ENCODE measurements at regions of chr12 and their contacts with region 1.

Region 1: DNA sequence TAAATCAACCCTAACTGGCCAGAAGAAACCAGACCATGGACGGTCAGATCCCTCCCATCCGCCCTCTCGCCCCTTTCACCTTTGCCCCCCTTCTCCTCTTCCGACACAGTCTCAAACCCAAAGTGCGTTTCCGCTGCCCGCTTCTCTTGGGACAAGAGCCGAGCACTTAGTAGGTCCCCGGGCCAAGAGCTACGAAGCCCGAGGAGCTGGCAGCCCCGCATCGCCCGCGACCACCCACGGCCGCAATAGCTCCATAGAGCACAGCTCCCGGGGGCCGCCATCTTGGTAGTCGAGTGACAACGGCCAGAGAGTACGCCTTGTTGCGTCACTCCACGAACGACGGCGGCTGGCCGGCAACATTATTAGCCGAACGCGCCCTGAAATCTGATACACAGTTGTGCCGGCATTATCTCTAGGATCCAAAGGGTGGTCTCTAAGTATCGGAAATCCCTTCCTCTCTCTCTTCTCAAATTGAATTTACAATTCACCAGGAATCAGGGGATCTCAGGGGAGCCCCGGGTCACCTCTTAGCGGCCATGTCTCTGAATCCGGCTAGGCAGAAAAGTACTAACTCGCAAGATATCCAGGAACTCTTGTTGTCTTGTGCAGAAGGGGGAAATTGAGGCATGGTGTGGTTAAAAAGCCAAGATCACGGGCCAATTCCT is at the start of gene COQ5:
- DNase-seq: peak; percentile 84 to 87
- H3K4me3 ChIP-seq: peak within 1 kb of the TSS; percentile 89
- H3K4me3 Mint-ChIP-seq: peak within 1 kb of the TSS; percentile 81
- H3K27ac Mint-ChIP-seq: peak within 1 kb of the TSS; percentile 93
- H3K4me1 ChIP-seq: peaks cover 5% of the 10 kb centered on the region; the same call in 1 of the 2 replicates
- H3K4me1 Mint-ChIP-seq: peaks cover 6% of the 10 kb centered on the region
- H3K27me3 ChIP-seq: no peaks in the 10 kb centered on the region
- H3K27me3 Mint-ChIP-seq: no peaks in the 10 kb centered on the region
- CTCF ChIP-seq: no peak
- total RNA-seq, gene COQ5: 20.7 and 20.9 TPM in 2 replicates

Region 2: DNA sequence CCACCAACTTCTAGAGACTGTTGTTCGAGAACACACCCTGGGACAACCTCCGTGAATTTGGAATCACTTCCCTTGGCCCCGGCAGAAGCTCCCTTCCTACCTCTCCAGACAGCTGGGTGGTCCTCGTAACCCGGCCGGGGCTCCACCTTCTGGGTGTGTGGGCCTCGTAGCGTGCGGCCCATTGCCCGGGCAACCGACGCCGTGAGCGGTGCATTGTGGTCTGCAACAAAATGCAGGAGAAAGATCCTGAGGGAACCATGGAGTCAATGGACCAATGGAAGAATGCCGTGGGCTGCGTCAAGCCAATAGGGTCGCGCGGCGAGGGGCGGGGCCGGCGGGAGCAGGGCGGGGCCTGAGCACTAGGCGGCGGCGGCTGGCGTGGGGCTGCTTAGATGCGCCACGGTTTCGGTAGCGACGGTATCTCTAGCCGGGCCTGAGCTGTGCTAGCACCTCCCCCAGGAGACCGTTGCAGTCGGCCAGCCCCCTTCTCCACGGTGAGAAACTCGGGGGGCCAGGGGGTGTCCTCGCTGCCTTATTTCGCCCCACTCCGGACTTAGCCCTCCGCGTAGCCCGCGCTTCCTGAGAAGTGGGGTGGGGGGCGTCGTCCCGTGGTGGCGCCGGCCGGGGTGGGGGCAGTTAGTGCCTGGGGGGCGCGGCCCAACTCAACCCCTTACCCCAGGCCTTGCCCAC is 33.1 kb before region 1 on chr12 and contains the start of gene DYNLL1:
- CTCF ChIA-PET with region 1: interaction called, 6 read pairs
- POLR2A ChIA-PET with region 1: interaction called, 6 read pairs
- intact Hi-C with region 1: loop called (anchors 1 kb)
- DNase-seq: peak; percentile 96 to 98
- H3K4me3 ChIP-seq: peak within 1 kb of the TSS; percentile 80
- H3K4me3 Mint-ChIP-seq: peak within 1 kb of the TSS; percentile 96
- H3K27ac Mint-ChIP-seq: peak within 1 kb of the TSS; percentile 80
- H3K4me1 ChIP-seq: peaks cover 17% of the 10 kb centered on the region
- H3K4me1 Mint-ChIP-seq: peaks cover 19% of the 10 kb centered on the region
- H3K27me3 ChIP-seq: no peaks in the 10 kb centered on the region
- H3K27me3 Mint-ChIP-seq: no peaks in the 10 kb centered on the region
- CTCF ChIP-seq: no peak
- total RNA-seq, gene DYNLL1: 323 and 324 TPM in 2 replicates

Region 3: DNA sequence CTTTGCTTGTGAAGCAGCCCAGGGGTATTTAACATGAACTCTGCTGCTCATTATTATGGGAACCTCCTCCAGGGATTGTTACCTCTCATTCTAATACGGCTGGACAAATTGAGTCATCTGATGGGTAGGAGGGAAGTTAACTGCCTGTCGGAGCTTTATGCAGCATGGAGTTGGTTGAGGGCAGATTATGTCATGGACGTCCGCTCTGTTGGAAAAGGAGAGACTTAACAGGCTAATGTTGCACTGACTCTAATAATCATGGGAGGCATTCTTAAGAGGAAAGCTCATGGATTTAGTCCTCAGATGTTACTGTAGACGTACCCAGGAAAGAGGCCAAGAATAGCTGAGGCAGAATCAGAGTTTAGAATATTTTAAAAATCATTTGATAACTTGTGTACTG is 42.3 kb after region 1 on chr12:
- CTCF ChIA-PET with region 1: no interaction called
- POLR2A ChIA-PET with region 1: interaction called, 13 read pairs
- intact Hi-C with region 1: no loop called
- DNase-seq: no peak
- H3K4me3 ChIP-seq: no peak overlapping the region
- H3K4me3 Mint-ChIP-seq: no peak overlapping the region
- H3K27ac Mint-ChIP-seq: peak overlapping the region; percentile 31
- H3K4me1 ChIP-seq: peaks cover 32% of the 10 kb centered on the region
- H3K4me1 Mint-ChIP-seq: peaks cover 27% of the 10 kb centered on the region
- H3K27me3 ChIP-seq: no peaks in the 10 kb centered on the region
- H3K27me3 Mint-ChIP-seq: no peaks in the 10 kb centered on the region
- CTCF ChIP-seq: no peak

Region 4: GRCh38 chr12:120804428-120804827 is 275.4 kb after region 1 on chr12:
- CTCF ChIA-PET with region 1: no interaction called
- POLR2A ChIA-PET with region 1: no interaction called
- intact Hi-C with region 1: no loop called
- DNase-seq: no peak
- H3K4me3 ChIP-seq: no peak overlapping the region
- H3K4me3 Mint-ChIP-seq: no peak overlapping the region
- H3K27ac Mint-ChIP-seq: no peak overlapping the region
- H3K4me1 ChIP-seq: peaks cover 7% of the 10 kb centered on the region
- H3K4me1 Mint-ChIP-seq: peaks cover 27% of the 10 kb centered on the region
- H3K27me3 ChIP-seq: no peaks in the 10 kb centered on the region
- H3K27me3 Mint-ChIP-seq: no peaks in the 10 kb centered on the region
- CTCF ChIP-seq: no peak

Measured in Caco-2 (cell line).